ENCODE measurements at regions of chr12 and their contacts with region 1.

Region 1: GRCh38 chr12:62799126-62799736 is 135.7 kb downstream of the PPM1H start:
- DNase-seq: no peak
- H3K4me3 ChIP-seq: no peak overlapping the region
- H3K27me3 ChIP-seq: no peaks in the 10 kb centered on the region
- CTCF ChIP-seq: peak; percentile 90

Region 2: DNA sequence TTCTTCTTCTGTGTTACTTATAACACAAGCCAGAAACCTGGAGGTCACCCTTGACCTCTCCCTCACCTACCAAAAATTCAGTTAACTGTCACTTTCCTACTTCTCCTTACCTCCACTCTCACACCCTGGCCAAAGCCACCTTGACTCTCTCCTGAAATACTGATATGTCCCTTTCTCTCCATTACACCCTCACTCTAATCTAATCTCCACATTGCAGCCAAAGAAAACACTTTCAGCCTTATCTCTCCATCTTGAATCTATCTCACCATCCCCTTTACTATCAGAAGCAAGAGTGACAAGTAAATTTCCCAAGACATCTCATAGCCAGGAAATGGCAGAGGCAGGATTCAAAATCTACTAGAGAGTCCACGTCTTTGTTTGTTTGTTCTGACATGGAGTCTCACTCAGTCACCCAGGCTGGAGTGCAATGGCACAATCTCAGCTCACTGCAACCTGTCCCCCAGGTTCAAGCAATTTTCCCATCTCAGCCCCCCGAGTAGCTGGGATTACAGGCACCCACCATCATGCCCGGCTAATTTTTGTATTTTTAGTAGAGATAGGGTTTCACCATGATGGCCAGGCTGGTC is 567.0 kb before region 1 on chr12:
- CTCF ChIA-PET with region 1: no interaction called
- POLR2A ChIA-PET with region 1: no interaction called
- DNase-seq: no peak
- H3K4me3 ChIP-seq: no peak overlapping the region
- H3K27me3 ChIP-seq: no peaks in the 10 kb centered on the region
- CTCF ChIP-seq: no peak

Region 3: DNA sequence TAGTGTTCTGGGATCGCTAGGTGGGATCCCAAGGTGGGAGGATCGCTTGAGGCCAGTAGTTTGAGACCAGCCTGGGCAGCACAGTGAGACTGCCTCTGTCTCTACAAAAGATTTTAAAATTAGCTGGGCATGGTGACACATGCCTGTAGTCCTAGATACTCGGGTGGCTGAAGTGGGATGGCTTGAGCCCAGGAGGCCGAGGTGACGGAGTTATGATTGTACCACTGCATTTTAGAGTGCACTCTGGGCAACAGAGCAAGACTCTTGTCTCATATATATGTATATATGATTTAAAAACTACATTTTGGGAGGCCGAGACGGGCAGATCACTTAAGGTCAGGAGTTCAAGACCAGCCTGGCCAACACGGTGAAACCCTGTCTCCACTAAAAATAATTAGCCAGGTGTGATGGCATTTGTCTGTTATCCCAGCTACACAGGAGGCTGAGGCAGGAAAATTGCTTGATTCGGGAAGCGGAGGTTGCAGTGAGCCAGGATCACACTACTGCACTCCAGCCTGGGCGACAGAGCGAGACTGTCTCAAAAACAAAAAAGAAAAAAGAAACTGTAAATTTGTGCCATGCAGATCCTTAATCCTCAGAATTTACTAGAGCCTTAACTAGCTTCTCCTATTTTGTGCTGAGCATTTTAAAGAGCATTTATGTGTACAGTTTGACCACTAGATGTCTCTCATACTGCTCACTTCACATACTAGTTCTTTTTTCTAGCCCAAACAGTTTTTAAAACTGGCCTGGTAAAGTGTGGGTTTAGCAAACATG is 217.8 kb before region 1 on chr12:
- CTCF ChIA-PET with region 1: interaction called, 179 read pairs
- POLR2A ChIA-PET with region 1: no interaction called
- DNase-seq: no peak
- H3K4me3 ChIP-seq: no peak overlapping the region
- H3K27me3 ChIP-seq: no peaks in the 10 kb centered on the region
- CTCF ChIP-seq: peak; percentile 66

Region 4: GRCh38 chr12:62683776-62684569 is 115.3 kb before region 1 on chr12:
- CTCF ChIA-PET with region 1: interaction called, 10 read pairs
- POLR2A ChIA-PET with region 1: no interaction called
- DNase-seq: no peak
- H3K4me3 ChIP-seq: no peak overlapping the region
- H3K27me3 ChIP-seq: no peaks in the 10 kb centered on the region
- CTCF ChIP-seq: no peak

Region 5: DNA sequence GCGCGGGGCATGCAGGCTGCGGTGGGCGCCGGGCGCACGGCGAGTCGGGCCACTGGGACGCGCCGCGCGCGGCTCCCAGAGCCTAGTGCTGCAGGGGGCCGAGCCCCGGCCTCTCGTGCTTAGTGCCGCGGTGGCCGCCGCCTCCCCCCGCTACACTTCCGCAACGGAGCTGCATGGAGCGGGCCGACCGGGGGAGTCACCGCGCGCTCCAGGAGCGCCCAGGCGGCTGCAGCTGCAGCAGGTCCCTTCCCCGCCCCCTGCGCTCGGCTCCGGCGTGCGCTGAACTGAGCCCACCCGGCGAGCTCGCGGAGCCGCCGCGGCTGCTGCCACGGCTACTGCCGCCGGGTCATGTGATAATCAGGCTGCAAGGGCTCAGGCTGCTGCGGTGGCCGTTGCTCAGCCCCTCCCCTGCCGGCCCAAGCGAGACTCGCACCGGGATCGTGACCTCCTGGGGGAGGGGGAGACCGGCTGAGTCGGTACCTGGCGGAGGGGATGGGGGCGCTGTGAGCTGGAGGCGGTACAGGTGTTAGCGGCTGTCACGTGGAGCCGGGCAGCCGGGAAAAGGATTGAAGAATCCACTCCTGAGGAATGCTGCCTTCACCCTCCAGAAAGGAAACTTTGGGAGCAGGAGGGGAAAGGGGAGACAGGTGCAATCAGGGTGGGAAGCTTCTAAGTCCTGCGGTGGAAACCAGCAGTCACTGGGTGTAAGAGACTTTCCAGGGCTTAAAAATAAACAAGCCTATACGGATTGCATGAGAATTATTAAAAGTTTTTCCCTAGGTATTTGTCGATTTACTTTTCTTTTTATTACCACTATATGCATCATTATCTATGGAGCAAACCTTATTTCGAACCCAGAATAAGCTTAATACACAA is 135.8 kb after region 1 on chr12 and contains the start of gene PPM1H:
- CTCF ChIA-PET with region 1: interaction called, 21 read pairs
- POLR2A ChIA-PET with region 1: no interaction called
- DNase-seq: no peak
- H3K4me3 ChIP-seq: peak within 1 kb of the TSS; percentile 78
- H3K27me3 ChIP-seq: no peaks in the 10 kb centered on the region
- CTCF ChIP-seq: peak; percentile 44
- polyA plus RNA-seq, gene PPM1H: 2.3 and 3.6 TPM in 2 replicates

Region 6: GRCh38 chr12:63228853-63229252 is 429.6 kb after region 1 on chr12:
- CTCF ChIA-PET with region 1: no interaction called
- POLR2A ChIA-PET with region 1: no interaction called
- DNase-seq: no peak
- H3K4me3 ChIP-seq: no peak overlapping the region
- H3K27me3 ChIP-seq: no peaks in the 10 kb centered on the region
- CTCF ChIP-seq: no peak

Measured in BJ (cell line).